ENCODE measurements at regions of chr12 and their contacts with region 1.

Region 1: DNA sequence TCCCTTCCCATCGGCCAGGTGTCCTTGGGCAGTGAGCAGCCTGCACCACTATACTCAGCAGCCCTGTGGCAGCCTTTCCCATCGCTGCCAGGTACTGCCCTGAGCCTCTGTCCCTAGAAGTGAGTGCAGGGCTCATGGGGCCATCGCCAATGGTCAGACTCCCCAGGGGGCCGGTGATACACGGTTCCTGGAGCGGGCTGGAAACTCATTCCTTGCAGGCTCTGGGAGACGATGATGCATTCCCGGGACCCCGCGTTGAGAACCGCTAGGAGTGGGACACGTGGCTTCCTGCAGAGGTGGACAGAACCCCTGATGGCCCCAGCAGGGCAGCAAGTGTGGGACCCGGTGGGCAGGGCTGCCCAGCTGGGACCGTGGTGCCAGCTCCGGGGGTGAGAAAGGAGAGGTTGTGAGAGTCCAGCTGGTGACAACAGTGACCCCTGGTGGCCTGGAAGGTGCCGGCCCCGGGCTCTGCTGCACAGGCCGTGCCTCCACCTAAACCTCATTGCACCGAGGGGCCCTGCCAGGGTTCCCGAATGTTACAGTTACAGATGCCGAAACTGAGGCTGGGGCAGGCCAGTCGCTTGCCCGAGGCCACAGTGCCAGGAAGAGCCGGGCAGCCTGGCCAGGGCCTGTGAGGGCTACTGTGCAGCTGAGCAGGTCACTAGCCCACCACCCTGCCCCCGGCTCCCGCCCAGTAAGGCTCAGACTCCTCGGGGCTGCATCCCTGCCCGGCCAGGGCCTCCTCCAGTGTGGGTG is 33.8 kb downstream of the FBRSL1 start:
- DNase-seq: peak; percentile 52 to 64 (median 60)
- H3K4me3 ChIP-seq: no peak overlapping the region
- H3K4me3 Mint-ChIP-seq: no peak overlapping the region
- H3K27ac ChIP-seq: no peak overlapping the region
- H3K27ac Mint-ChIP-seq: peak overlapping the region in 1 of 7 donors; percentile 64
- H3K4me1 ChIP-seq: no peaks in the 10 kb centered on the region
- H3K4me1 Mint-ChIP-seq: peaks cover 11% of the 10 kb centered on the region
- H3K27me3 ChIP-seq: no peaks in the 10 kb centered on the region
- H3K27me3 Mint-ChIP-seq: peaks cover 0 to 5% (median 0%) of the 10 kb centered on the region in 3 donors
- CTCF ChIP-seq: peak; percentile 93

Region 2: GRCh38 chr12:132414634-132415326 is 109.0 kb before region 1 on chr12:
- intact Hi-C with region 1: loop called (anchors 1 kb)
- DNase-seq: peak; percentile 70 to 78 (median 77)
- H3K4me3 ChIP-seq: no peak overlapping the region
- H3K4me3 Mint-ChIP-seq: no peak overlapping the region
- H3K27ac ChIP-seq: no peak overlapping the region
- H3K27ac Mint-ChIP-seq: no peak overlapping the region
- H3K4me1 ChIP-seq: peaks cover 6 to 10% of the 10 kb centered on the region in 2 donors
- H3K4me1 Mint-ChIP-seq: no peaks in the 10 kb centered on the region
- H3K27me3 ChIP-seq: peaks cover 0 to 10% of the 10 kb centered on the region in 2 donors
- H3K27me3 Mint-ChIP-seq: peaks cover 7 to 27% (median 10%) of the 10 kb centered on the region in 3 donors
- CTCF ChIP-seq: peak; percentile 96

Region 3: DNA sequence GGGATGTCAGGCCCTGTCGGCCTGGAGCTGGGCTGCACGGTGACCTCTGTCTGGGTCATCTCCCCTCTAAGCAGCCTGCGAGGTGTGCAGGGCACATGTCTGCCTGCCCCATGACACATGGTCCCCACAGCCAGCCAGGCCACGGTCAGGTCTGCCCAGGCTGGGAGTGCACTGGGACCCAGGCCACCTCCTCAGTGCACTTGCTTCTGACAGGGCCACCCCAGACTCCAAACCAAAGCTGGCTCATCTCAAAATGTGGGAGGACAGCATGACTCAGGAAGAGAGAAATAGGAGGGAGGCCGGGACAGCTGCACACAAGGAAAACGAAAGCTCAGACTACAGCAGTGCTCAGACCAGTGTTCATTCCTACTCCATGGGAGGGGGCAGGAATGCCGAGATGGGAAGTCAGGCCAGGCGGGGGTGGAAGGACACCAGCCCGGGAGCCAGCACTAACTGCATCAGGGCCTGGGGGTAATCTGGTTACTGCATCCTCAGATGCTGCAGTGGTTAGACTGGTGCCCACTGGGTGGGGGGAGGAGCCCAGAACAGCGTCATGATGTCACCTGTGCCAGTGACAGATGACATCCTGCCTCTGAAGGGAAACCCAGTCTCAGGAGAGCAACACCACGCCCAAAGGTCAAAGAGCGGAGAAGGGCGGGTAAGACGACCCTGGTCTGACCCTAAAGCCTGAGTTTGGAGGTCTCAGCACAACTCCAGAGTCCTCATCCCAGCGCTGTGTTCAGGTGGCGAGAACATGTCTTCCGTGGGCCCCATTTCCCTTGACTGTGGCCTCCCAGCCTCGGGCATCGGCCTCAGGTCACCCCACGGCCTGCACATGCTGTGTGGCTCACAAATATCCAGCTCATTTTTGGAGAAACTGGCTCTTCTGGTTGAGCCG is 98.9 kb after region 1 on chr12:
- intact Hi-C with region 1: no loop called
- DNase-seq: no peak
- H3K4me3 ChIP-seq: no peak overlapping the region
- H3K4me3 Mint-ChIP-seq: no peak overlapping the region
- H3K27ac ChIP-seq: no peak overlapping the region
- H3K27ac Mint-ChIP-seq: peak overlapping the region in 1 of 7 donors; percentile 47
- H3K4me1 ChIP-seq: no peaks in the 10 kb centered on the region
- H3K4me1 Mint-ChIP-seq: peaks cover 2% of the 10 kb centered on the region
- H3K27me3 ChIP-seq: peaks cover 8 to 28% of the 10 kb centered on the region in 2 donors
- H3K27me3 Mint-ChIP-seq: peaks cover 19 to 40% (median 26%) of the 10 kb centered on the region in 3 donors
- CTCF ChIP-seq: no peak

Measured in CD14-positive monocyte (primary cell).